Mammary epithelial cell (primary cell): ENCODE measurements at regions of chr1 and their contacts with region 1.

Region 1: GRCh38 chr1:33897092-33897725 is 33.3 kb downstream of the HMGB4 start:
- DNase-seq: no peak
- H3K4me3 ChIP-seq: no peak overlapping the region
- H3K27ac ChIP-seq: no peak overlapping the region
- H3K4me1 ChIP-seq: no peaks in the 10 kb centered on the region
- H3K27me3 ChIP-seq: no peaks in the 10 kb centered on the region
- CTCF ChIP-seq: no peak

Region 2: GRCh38 chr1:33852711-33853110 is 44.5 kb before region 1 on chr1:
- CTCF ChIA-PET with region 1: no interaction called
- dilution Hi-C with region 1: loop called (anchors 5 kb)
- in situ Hi-C with region 1: no loop called
- intact Hi-C with region 1: no loop called
- DNase-seq: no peak
- H3K4me3 ChIP-seq: no peak overlapping the region
- H3K27ac ChIP-seq: no peak overlapping the region
- H3K4me1 ChIP-seq: no peaks in the 10 kb centered on the region
- H3K27me3 ChIP-seq: no peaks in the 10 kb centered on the region
- CTCF ChIP-seq: no peak